ENCODE measurements at regions of chr6 and their contacts with region 1.

Region 1: DNA sequence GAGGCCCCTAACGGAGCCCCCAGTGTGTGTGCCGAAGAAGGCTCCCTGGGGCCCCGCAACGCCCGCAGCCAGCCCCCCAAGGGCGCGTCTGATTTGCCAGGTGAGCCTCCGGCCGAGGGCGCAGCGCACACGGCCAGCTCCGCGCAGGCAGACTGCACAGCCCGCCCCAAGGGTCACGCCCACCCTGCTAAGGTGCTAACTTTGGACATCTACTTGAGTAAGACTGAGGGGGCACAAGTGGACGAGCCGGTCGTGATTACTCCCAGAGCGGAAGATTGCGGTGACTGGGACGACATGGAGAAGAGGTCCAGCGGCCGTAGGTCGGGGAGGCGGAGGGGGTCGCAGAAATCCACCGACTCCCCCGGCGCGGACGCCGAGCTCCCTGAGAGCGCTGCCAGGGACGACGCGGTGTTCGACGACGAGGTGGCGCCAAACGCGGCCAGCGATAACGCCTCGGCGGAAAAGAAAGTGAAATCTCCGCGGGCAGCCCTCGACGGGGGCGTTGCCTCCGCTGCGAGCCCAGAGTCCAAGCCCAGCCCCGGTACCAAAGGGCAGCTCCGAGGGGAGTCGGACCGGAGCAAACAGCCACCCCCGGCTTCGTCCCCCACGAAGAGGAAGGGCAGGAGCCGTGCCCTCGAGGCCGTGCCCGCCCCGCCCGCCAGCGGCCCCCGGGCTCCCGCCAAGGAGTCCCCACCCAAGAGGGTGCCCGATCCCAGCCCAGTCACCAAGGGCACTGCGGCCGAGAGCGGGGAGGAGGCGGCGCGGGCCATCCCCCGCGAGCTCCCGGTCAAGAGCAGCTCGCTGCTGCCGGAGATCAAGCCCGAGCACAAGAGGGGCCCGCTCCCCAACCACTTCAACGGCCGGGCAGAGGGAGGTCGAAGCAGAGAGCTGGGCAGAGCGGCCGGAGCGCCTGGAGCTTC is 117.0 kb downstream of the RTN4IP1 start:
- H3K4me3 Mint-ChIP-seq: peak overlapping the region; percentile 86
- H3K27ac Mint-ChIP-seq: peak overlapping the region; percentile 96
- H3K4me1 Mint-ChIP-seq: peaks cover 60% of the 10 kb centered on the region
- H3K27me3 Mint-ChIP-seq: no peaks in the 10 kb centered on the region

Region 2: GRCh38 chr6:106501960-106502371 is 10.3 kb before region 1 on chr6:
- intact Hi-C with region 1: loop called (anchors 1 kb)
- H3K4me3 Mint-ChIP-seq: no peak overlapping the region
- H3K27ac Mint-ChIP-seq: peak overlapping the region; percentile 78
- H3K4me1 Mint-ChIP-seq: peaks cover 48% of the 10 kb centered on the region
- H3K27me3 Mint-ChIP-seq: no peaks in the 10 kb centered on the region

Region 3: DNA sequence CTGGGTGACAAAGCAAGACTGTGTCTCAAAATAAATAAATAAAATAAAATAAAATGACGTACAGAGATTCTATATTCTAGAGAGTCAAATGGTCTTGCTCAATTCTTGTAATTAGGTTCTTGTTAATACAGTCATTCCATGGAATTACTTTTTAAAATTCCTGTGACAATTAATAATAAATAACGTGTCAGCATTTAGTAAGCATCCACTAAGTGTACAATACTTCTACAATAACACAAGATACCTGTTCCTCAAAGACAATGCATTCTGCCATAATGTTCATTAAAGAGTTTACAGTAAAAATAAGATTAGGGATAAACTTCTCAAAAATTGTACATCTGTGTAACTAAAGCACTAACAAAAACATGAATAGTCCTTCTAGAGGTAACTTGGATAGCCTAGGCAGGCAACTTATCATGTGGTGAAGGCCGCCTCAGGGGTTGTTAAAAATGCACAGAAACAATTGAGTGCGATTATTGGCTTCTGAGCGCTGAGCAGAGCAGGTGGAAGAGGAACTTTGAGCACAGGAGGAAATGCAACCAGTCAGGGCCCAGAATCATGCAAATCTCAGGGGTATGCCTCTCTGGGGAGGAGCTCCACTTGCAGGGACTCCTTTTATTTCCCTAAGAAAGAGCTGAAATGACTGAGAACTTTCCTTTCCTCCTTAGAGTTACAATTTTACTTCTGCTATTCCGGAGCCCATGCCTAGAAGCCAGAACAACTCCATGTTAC is 154.1 kb after region 1 on chr6:
- intact Hi-C with region 1: no loop called
- H3K4me3 Mint-ChIP-seq: no peak overlapping the region
- H3K27ac Mint-ChIP-seq: no peak overlapping the region
- H3K4me1 Mint-ChIP-seq: peaks cover 14% of the 10 kb centered on the region
- H3K27me3 Mint-ChIP-seq: no peaks in the 10 kb centered on the region

Measured in dendritic cell treated with granulocyte-macrophage colony-stimulating factor and Interleukin-4, amounts not matched to agents 40 ng/mL and 50 ng/mL, for 4 days (primary cell).